CD4-positive, alpha-beta memory T cell (primary cell): ENCODE measurements at regions of chr2 and their contacts with region 1.

Region 1: DNA sequence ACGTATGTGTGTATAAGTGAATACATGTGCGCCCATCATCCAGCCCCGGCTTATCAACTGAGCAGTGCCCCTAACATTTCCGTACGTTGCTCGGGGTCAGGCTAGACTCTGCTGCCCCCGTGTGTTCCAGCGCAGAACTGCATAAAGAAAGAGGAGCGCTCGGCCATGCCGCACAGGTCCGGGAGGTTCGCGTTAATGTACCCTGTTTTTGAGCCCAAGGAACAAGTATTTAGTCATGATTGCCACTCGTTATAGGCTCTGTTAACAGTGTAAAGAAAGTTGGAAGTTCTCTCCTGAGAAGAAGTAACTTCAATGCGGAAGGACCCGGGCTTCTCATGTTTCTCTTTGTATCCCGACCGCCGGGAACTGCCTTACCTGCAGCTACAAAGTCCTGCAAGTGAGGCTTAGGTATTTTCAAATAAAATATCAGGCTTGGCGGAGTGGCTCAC is 55.7 kb downstream of the CD8B2 start:
- DNase-seq: peak; percentile 53 to 68 (median 59)
- H3K4me3 ChIP-seq: peak overlapping the region in 1 of 2 donors; percentile 15
- H3K4me3 Mint-ChIP-seq: peak overlapping the region; percentile 70 to 89 (median 76)
- H3K27ac ChIP-seq: no peak overlapping the region
- H3K27ac Mint-ChIP-seq: peak overlapping the region in 1 of 7 donors; percentile 82
- H3K4me1 ChIP-seq: peaks cover 5% of the 10 kb centered on the region
- H3K4me1 Mint-ChIP-seq: peaks cover 0 to 4% (median 3%) of the 10 kb centered on the region in 4 donors
- H3K27me3 ChIP-seq: peaks cover 12% of the 10 kb centered on the region
- H3K27me3 Mint-ChIP-seq: peaks cover 22 to 24% of the 10 kb centered on the region in 2 donors

Region 2: DNA sequence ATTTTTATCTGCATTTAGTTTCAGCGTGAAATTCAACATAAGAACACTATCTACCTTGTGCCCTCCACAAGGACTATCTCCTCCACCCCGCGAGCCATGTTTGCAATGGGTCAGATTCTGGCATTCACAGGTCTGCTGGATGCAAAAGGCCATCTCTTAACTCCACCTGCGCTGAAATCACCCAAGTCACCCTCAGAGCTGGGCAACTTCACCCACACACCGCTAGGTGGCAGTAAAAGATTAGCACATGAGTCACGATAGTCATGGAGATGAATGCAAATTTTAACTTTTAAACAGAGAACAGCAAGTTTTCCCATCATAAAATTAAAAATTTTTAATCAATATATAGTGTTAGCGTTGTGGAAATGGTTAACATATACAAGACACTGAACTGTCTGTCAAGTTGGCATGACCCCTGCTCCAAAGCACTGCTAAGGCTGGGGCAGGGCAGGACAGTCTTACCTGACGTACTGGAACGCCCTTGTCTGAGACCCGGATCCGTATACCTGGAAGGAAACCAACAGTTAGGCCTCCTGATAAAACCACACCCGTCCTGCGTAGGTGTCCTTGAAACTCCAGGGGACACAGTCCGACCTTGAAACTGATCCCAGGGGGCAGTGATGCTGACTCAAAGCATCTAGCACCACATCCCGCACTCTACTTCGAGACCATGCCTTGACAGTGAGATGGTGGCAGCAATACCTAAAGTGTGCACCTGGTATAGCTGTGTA is 438.3 kb before region 1 on chr2:
- CTCF ChIA-PET with region 1: interaction called, 34 read pairs
- POLR2A ChIA-PET with region 1: no interaction called
- intact Hi-C with region 1: loop called (anchors 1 kb)
- DNase-seq: peak; percentile 68 to 74 (median 72)
- H3K4me3 ChIP-seq: no peak overlapping the region
- H3K4me3 Mint-ChIP-seq: no peak overlapping the region
- H3K27ac ChIP-seq: no peak overlapping the region
- H3K27ac Mint-ChIP-seq: peak overlapping the region; percentile 26 to 79 (median 72)
- H3K4me1 ChIP-seq: peaks cover 13% of the 10 kb centered on the region
- H3K4me1 Mint-ChIP-seq: peaks cover 5 to 18% (median 15%) of the 10 kb centered on the region in 4 donors
- H3K27me3 ChIP-seq: no peaks in the 10 kb centered on the region
- H3K27me3 Mint-ChIP-seq: no peaks in the 10 kb centered on the region

Region 3: DNA sequence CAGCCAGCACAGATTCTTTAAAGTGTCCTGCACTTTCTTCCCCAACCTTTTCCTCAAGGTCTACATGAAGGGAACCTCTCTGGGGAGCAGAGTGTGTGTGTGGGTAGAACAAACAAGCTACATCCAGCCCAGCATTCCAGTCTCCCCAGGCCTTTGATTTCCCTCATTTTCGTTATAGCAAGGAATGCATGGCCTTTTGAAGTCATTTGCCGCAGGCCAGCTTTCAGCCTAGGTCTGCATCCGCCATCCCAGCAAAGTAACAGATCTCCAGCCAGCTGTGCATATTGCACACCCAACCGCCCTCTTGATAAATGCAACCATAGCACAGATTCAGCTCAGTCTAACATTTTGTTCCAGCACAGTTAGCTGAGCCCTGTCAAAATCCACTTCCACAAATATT is 11.1 kb before region 1 on chr2:
- CTCF ChIA-PET with region 1: interaction called, 14 read pairs
- POLR2A ChIA-PET with region 1: no interaction called
- intact Hi-C with region 1: no loop called
- DNase-seq: no peak
- H3K4me3 ChIP-seq: no peak overlapping the region
- H3K4me3 Mint-ChIP-seq: no peak overlapping the region
- H3K27ac ChIP-seq: no peak overlapping the region
- H3K27ac Mint-ChIP-seq: no peak overlapping the region
- H3K4me1 ChIP-seq: no peaks in the 10 kb centered on the region
- H3K4me1 Mint-ChIP-seq: no peaks in the 10 kb centered on the region
- H3K27me3 ChIP-seq: no peaks in the 10 kb centered on the region
- H3K27me3 Mint-ChIP-seq: peaks cover 13 to 21% of the 10 kb centered on the region in 2 donors